HepG2 (cell line): ENCODE measurements at regions of chr15 and their contacts with region 1.

Region 1: DNA sequence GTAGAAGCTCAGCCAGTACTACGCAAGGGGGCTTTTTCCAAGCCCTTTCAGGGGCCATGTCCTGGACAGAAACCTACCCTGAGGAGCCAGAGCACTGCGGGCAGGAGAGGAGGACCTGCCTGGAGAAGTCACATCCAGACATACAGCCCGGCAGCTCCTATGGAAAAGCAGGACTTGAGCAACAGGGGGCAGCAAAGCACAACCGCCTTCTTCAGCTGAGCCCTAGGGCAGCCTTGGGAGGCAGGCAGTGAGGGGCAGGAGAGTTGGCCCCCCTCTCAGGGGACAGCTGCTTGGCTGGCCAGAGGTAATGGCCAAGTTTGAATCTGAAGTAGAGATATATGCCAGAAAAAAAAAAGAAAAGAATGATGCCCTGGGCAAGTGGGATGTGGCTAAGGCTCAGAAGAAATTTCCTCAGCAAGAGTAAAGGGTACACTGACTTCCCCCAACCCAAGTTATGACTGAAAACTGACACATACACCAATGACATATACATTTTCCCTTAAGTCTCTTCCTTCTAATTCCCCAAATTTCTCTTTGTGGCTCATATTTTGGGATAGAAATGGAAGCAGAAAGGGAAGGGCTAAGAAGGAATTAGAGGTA is 56.9 kb downstream of the CYP19A1 start:
- DNase-seq: peak; percentile 44
- ATAC-seq: peak; percentile 98
- H3K4me3 ChIP-seq: no peak overlapping the region
- H3K27ac ChIP-seq: no peak overlapping the region
- H3K4me1 ChIP-seq: peaks cover 23% of the 10 kb centered on the region
- H3K27me3 ChIP-seq: no peaks in the 10 kb centered on the region
- CTCF ChIP-seq: peak; percentile 92
- EP300 ChIP-seq: no peak
- POLR2A ChIP-seq: no peak
- RAD21 ChIP-seq: peak; percentile 90

Region 2: GRCh38 chr15:51162865-51163762 is 118.4 kb before region 1 on chr15:
- CTCF ChIA-PET with region 1: no interaction called
- POLR2A ChIA-PET with region 1: no interaction called
- in situ Hi-C with region 1: no loop called
- intact Hi-C with region 1: loop called (anchors 10 kb)
- DNase-seq: peak; percentile 45
- ATAC-seq: peak; percentile 96
- H3K4me3 ChIP-seq: no peak overlapping the region
- H3K27ac ChIP-seq: no peak overlapping the region
- H3K4me1 ChIP-seq: no peaks in the 10 kb centered on the region
- H3K27me3 ChIP-seq: no peaks in the 10 kb centered on the region
- CTCF ChIP-seq: peak; percentile 84
- EP300 ChIP-seq: no peak
- POLR2A ChIP-seq: no peak
- RAD21 ChIP-seq: peak; percentile 69; the same call in 1 of the 2 replicates

Region 3: GRCh38 chr15:51292259-51292658 is 10.8 kb after region 1 on chr15:
- CTCF ChIA-PET with region 1: no interaction called
- POLR2A ChIA-PET with region 1: no interaction called
- in situ Hi-C with region 1: no loop called
- intact Hi-C with region 1: no loop called
- DNase-seq: no peak
- ATAC-seq: no peak
- H3K4me3 ChIP-seq: no peak overlapping the region
- H3K27ac ChIP-seq: no peak overlapping the region
- H3K4me1 ChIP-seq: peaks cover 34% of the 10 kb centered on the region
- H3K27me3 ChIP-seq: no peaks in the 10 kb centered on the region
- CTCF ChIP-seq: no peak
- EP300 ChIP-seq: no peak
- POLR2A ChIP-seq: no peak
- RAD21 ChIP-seq: no peak

Region 4: DNA sequence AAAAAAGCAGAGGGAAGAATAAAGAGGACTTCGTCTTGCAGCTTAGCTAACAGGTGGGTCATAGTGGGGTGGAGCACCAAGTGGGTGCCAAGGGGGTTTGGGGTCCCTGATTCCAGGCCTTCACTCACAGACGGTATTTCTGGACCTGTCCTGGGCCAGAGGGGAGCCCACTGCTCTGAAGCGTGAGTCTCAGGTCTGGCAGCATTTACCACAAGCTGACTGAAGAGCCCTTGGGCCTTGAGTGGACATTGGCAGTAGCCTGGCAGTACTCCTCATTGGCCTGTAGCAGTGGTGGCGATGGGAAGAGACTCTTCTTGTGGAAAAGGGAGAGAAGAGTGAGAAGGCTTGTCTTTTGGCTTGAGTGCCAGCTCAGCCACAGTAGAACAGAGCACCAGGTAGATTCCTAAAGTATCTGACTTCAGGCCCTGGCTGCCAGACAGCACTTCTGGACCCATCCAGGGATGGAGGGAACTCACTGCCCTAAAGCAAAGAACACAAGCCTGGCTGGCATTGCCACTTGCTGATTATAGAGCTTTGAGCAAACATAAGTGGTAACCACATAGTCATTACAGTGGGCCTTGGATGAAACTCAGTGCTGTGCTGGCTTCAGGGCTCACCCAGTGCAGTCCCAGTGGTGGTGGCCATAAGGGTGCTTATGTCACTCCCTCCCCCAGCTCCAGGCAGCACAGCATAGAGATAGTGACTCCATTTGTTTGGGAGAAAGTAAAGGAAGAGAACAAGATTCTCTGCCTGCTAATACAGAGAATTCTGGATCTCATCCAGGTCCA is 133.0 kb after region 1 on chr15:
- CTCF ChIA-PET with region 1: no interaction called
- POLR2A ChIA-PET with region 1: no interaction called
- in situ Hi-C with region 1: no loop called
- intact Hi-C with region 1: no loop called
- DNase-seq: no peak
- ATAC-seq: no peak
- H3K4me3 ChIP-seq: no peak overlapping the region
- H3K27ac ChIP-seq: no peak overlapping the region
- H3K4me1 ChIP-seq: no peaks in the 10 kb centered on the region
- H3K27me3 ChIP-seq: no peaks in the 10 kb centered on the region; a peak in 1 of 5 replicates
- CTCF ChIP-seq: no peak
- EP300 ChIP-seq: no peak
- POLR2A ChIP-seq: no peak
- RAD21 ChIP-seq: no peak

Region 5: DNA sequence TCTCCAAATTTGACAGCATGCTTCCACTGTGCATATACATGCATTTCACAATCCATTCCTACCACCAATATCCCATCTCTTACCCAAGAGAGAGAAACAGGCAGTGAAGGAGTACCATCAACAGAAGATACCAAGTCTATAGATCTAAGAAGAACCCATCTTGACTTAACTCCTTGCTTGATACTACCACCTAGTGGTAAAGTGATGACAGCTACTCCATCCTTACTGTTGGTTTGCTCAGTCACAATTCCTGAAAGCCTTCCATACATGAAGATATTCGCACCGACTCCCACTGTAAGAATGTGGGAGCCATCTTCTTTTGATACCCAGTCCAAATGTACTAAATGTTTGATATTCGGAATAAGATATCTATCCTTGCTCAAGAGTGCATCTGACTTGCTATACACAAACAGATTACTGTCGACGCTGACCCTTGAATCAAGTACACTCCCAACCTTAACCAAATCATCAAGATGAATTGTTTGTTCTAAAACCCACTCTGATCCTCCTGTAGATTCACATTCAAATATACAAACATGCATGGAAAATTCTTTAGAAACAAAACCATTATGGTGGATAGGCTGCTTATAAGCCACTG is 218.0 kb after region 1 on chr15:
- CTCF ChIA-PET with region 1: no interaction called
- POLR2A ChIA-PET with region 1: no interaction called
- in situ Hi-C with region 1: no loop called
- intact Hi-C with region 1: loop called (anchors 2 kb)
- DNase-seq: peak; percentile 43
- ATAC-seq: peak; percentile 81
- H3K4me3 ChIP-seq: no peak overlapping the region
- H3K27ac ChIP-seq: no peak overlapping the region
- H3K4me1 ChIP-seq: peaks cover 7% of the 10 kb centered on the region
- H3K27me3 ChIP-seq: no peaks in the 10 kb centered on the region
- CTCF ChIP-seq: peak; percentile 80
- EP300 ChIP-seq: no peak
- POLR2A ChIP-seq: no peak
- RAD21 ChIP-seq: no peak; the same call in 1 of the 2 replicates